GM12878 (cell line): ENCODE measurements at regions of chr2 and their contacts with region 1.

Region 1: DNA sequence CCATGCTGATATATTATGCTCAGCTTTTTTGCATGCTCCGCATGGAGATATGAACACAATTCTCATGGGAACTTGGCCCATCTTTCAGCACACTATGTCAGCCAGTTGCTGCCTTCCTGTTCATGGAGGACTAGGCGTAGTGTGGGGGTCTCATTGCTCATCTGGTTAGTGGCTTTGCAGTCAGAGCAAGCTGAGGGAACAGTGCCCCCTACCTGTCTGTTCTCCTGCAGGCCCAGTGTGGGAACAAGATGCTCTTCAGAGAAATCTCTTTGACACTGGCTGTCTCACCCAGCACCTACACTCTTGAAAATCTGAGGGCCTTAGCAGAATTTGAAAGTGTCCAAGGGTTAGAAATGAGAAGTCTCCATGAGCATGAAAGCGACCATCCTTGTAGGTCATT is 47.1 kb downstream of the SPTBN1 start:
- DNase-seq: no peak
- ATAC-seq: peak; percentile 92
- H3K4me3 ChIP-seq: no peak overlapping the region
- H3K27ac ChIP-seq: no peak overlapping the region
- H3K4me1 ChIP-seq: no peaks in the 10 kb centered on the region
- H3K27me3 ChIP-seq: no peaks in the 10 kb centered on the region; a peak in 3 of 4 replicates
- CTCF ChIP-seq: peak; percentile 63 to 75 (median 70)
- EP300 ChIP-seq: no peak
- POLR2A ChIP-seq: no peak
- RAD21 ChIP-seq: peak; percentile 81

Region 2: GRCh38 chr2:54052825-54053718 is 450.1 kb before region 1 on chr2:
- CTCF ChIA-PET with region 1: interaction called, 10 read pairs
- POLR2A ChIA-PET with region 1: no interaction called
- RAD21 ChIA-PET with region 1: no interaction called
- SMC1A ChIA-PET with region 1: interaction called, 3 read pairs
- in situ Hi-C with region 1: no loop called
- intact Hi-C with region 1: loop called (anchors 5 kb)
- DNase-seq: no peak
- ATAC-seq: peak; percentile 65
- H3K4me3 ChIP-seq: 0 out of 2 replicates have a peak overlapping the region, but pooled peaks have one; percentile 43
- H3K27ac ChIP-seq: peak overlapping the region; percentile 50
- H3K4me1 ChIP-seq: peaks cover 22% of the 10 kb centered on the region
- H3K27me3 ChIP-seq: no peaks in the 10 kb centered on the region
- CTCF ChIP-seq: peak; percentile 35 to 48 (median 37); a peak in 4 of 6 replicates
- EP300 ChIP-seq: no peak
- POLR2A ChIP-seq: no peak
- RAD21 ChIP-seq: peak; percentile 69

Region 3: GRCh38 chr2:54106631-54107454 is 396.3 kb before region 1 on chr2:
- CTCF ChIA-PET with region 1: interaction called, 36 read pairs
- POLR2A ChIA-PET with region 1: no interaction called
- RAD21 ChIA-PET with region 1: interaction called, 17 read pairs
- SMC1A ChIA-PET with region 1: interaction called, 22 read pairs
- in situ Hi-C with region 1: no loop called
- intact Hi-C with region 1: loop called (anchors 2 kb)
- DNase-seq: no peak
- ATAC-seq: peak; percentile 83
- H3K4me3 ChIP-seq: no peak overlapping the region
- H3K27ac ChIP-seq: no peak overlapping the region
- H3K4me1 ChIP-seq: no peaks in the 10 kb centered on the region
- H3K27me3 ChIP-seq: no peaks in the 10 kb centered on the region
- CTCF ChIP-seq: peak; percentile 59 to 73 (median 60); a peak in 5 of 6 replicates
- EP300 ChIP-seq: no peak
- POLR2A ChIP-seq: no peak
- RAD21 ChIP-seq: peak; percentile 73

Region 4: GRCh38 chr2:54206596-54206995 is 296.6 kb before region 1 on chr2:
- CTCF ChIA-PET with region 1: interaction called, 14 read pairs
- POLR2A ChIA-PET with region 1: no interaction called
- RAD21 ChIA-PET with region 1: interaction called, 5 read pairs
- SMC1A ChIA-PET with region 1: interaction called, 16 read pairs
- in situ Hi-C with region 1: no loop called
- intact Hi-C with region 1: loop called (anchors 2 kb)
- DNase-seq: no peak
- ATAC-seq: peak; percentile 80
- H3K4me3 ChIP-seq: no peak overlapping the region
- H3K27ac ChIP-seq: no peak overlapping the region
- H3K4me1 ChIP-seq: no peaks in the 10 kb centered on the region
- H3K27me3 ChIP-seq: no peaks in the 10 kb centered on the region
- CTCF ChIP-seq: peak; percentile 39 to 50 (median 45); a peak in 4 of 6 replicates
- EP300 ChIP-seq: no peak
- POLR2A ChIP-seq: no peak
- RAD21 ChIP-seq: peak; percentile 57

Region 5: GRCh38 chr2:54482715-54483114 is 20.5 kb before region 1 on chr2:
- CTCF ChIA-PET with region 1: interaction called, 19 read pairs
- POLR2A ChIA-PET with region 1: no interaction called
- RAD21 ChIA-PET with region 1: interaction called, 3 read pairs
- SMC1A ChIA-PET with region 1: interaction called, 9 read pairs
- in situ Hi-C with region 1: no loop called
- intact Hi-C with region 1: no loop called
- DNase-seq: no peak
- ATAC-seq: no peak
- H3K4me3 ChIP-seq: no peak overlapping the region
- H3K27ac ChIP-seq: no peak overlapping the region
- H3K4me1 ChIP-seq: no peaks in the 10 kb centered on the region
- H3K27me3 ChIP-seq: no peaks in the 10 kb centered on the region
- CTCF ChIP-seq: no peak
- EP300 ChIP-seq: no peak
- POLR2A ChIP-seq: no peak
- RAD21 ChIP-seq: no peak

Region 6: GRCh38 chr2:54492335-54492734 is 10.9 kb before region 1 on chr2:
- CTCF ChIA-PET with region 1: interaction called, 12 read pairs
- POLR2A ChIA-PET with region 1: interaction called, 4 read pairs
- RAD21 ChIA-PET with region 1: interaction called, 3 read pairs
- SMC1A ChIA-PET with region 1: interaction called, 8 read pairs
- in situ Hi-C with region 1: no loop called
- intact Hi-C with region 1: no loop called
- DNase-seq: no peak
- ATAC-seq: no peak
- H3K4me3 ChIP-seq: no peak overlapping the region
- H3K27ac ChIP-seq: no peak overlapping the region
- H3K4me1 ChIP-seq: no peaks in the 10 kb centered on the region
- H3K27me3 ChIP-seq: no peaks in the 10 kb centered on the region
- CTCF ChIP-seq: no peak
- EP300 ChIP-seq: no peak
- POLR2A ChIP-seq: no peak
- RAD21 ChIP-seq: no peak

Region 7: GRCh38 chr2:54579684-54580620 is 76.8 kb after region 1 on chr2:
- CTCF ChIA-PET with region 1: no interaction called
- POLR2A ChIA-PET with region 1: no interaction called
- RAD21 ChIA-PET with region 1: no interaction called
- SMC1A ChIA-PET with region 1: no interaction called
- in situ Hi-C with region 1: no loop called
- intact Hi-C with region 1: no loop called
- DNase-seq: peak; percentile 89
- ATAC-seq: peak; percentile 82
- H3K4me3 ChIP-seq: peak overlapping the region; percentile 45
- H3K27ac ChIP-seq: peak overlapping the region; percentile 95
- H3K4me1 ChIP-seq: peaks cover 81% of the 10 kb centered on the region
- H3K27me3 ChIP-seq: no peaks in the 10 kb centered on the region
- CTCF ChIP-seq: no peak
- EP300 ChIP-seq: 0 out of 4 replicates have a peak, but pooled peaks have one; percentile 39 to 69
- POLR2A ChIP-seq: no peak
- RAD21 ChIP-seq: peak; percentile 13; the same call in 1 of the 2 replicates